Ascending aorta (tissue), 2 donors: ENCODE measurements at regions of chr11 and their contacts with region 1.

Region 1: DNA sequence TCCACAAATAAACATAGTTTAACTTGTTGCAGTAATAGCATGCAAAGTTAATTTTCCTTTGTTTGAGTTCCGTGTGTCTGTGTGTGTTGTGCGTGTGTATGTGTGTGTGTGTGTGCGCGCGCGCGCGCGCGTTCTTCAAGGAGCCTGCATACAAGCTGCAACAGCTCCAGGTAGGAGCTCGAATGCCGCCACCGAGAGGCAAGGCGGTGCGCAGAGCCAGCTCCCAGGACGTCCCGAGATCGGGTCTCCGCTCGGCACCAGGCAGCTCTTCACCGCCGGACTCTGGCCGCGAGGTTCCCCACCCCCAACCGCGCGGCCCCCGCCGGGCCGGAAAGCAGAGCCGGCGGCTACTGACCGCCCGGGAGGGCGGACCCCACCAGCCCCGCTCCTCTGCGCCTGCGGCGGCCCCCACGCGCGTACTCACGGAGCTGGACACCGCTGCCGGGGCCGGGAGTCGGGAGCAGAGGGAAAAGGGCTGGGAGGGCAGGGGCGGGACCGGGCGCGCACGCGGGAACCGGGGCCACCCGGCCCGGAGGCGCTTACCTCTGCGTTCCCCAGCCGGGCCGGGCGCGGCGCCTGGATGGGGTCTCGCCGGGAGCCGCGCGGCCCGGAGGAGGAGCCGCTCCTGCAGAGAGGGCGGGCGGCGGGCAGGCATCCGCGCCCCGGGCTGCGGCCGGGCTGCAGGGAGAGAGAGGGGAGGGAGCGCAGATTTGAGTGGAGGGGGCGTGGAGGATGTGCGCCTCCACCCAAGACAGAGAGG is 40.4 kb upstream of the AKIP1 start:
- DNase-seq: peak in 1 of 2 donors; percentile 64
- H3K4me3 ChIP-seq: peak overlapping the region; percentile 75 to 90
- H3K27ac ChIP-seq: peak overlapping the region; percentile 36 to 70
- H3K4me1 ChIP-seq: peaks cover 0 to 2% of the 10 kb centered on the region in 2 donors
- H3K27me3 ChIP-seq: no peaks in the 10 kb centered on the region
- CTCF ChIP-seq: no peak

Region 2: DNA sequence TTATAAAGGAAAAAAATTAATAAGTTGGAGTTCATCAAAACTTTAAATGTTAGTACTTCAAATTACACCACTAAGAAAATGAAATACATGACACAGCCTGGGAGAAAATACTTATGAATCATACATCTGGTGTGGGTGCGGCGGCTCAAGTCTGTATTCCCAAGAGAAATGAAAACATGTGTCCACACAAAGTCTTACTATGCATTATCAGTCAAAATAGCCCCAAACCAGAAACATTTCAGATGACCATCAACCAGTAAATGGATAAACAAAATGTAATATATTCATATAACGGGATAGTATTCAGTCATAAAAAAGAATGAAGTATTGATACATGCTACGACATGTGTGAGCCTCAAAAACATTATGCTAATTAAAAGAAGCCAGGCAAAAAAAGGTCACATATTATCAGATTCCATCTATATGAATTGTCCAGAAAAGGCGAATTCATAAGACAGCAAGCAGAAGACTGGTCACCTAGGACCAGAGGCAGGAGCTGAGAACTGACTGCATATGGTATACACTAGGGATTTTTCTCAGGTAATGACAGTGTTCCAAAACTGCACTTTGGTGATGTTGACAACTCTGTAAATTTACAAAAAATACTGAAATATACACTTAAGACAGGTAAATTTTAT is 35.1 kb after region 1 on chr11:
- intact Hi-C with region 1: loop called (anchors 1 kb)
- DNase-seq: no peak
- H3K4me3 ChIP-seq: no peak overlapping the region
- H3K27ac ChIP-seq: no peak overlapping the region
- H3K4me1 ChIP-seq: peaks cover 0 to 3% of the 10 kb centered on the region in 2 donors
- H3K27me3 ChIP-seq: no peaks in the 10 kb centered on the region
- CTCF ChIP-seq: no peak